ENCODE measurements at regions of chr1 and their contacts with region 1.

Region 1: DNA sequence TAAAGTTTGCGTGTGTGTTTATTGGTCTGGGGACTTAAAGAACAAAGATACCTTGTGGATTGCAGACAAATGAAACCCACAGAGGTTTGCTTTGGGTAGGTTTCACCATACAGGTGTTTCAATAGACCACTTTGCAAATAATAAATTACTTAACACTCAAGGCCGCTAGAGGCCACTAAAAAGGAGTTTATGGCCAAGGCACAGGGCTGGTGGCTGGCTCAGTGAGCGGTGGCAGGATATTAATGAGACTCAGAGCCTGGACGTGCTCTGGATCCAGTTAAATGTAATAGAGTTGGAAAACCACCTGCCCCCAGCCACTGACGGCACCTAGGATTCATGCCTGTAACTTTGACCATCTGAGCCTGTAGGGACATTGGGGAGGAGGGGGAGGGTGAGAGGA is 44.5 kb downstream of the LRRC38 start:
- DNase-seq: no peak
- H3K4me3 ChIP-seq: no peak overlapping the region
- CTCF ChIP-seq: no peak
- POLR2A ChIP-seq: no peak

Region 2: GRCh38 chr1:12220890-12221289 is 1248.5 kb before region 1 on chr1:
- intact Hi-C with region 1: loop called (anchors 5 kb)
- DNase-seq: no peak
- H3K4me3 ChIP-seq: no peak overlapping the region
- CTCF ChIP-seq: no peak
- POLR2A ChIP-seq: no peak

Region 3: DNA sequence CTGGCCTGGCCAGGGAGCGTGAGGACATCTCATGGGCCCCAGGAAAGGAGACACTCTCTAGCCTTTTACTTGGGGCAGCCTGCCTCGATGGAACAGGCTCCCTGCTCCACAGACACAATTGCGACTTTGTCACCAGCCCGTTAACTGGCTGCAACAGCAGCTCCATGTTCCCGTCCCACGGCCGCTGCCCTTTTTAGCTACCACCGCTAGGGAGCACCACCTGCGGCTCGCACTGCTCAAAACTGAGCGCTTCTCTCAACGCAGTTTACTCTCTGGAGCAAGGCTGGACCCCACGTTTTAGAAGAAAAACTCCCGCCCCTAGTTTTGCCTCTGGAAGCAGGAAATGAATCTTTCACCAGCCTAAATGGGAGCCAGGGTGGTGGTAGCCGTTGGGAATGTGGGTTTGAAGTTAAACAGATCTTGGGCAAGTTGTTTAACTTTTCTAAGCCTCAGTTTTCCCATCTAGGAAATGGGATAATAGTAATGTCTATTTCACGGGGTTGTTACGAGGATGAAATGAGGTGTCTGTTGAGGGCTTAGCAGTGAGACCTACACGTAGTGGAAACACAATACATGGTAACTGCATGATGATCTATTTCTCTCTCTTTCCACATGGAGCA is 48.0 kb after region 1 on chr1:
- intact Hi-C with region 1: no loop called
- DNase-seq: no peak
- H3K4me3 ChIP-seq: no peak overlapping the region
- CTCF ChIP-seq: no peak
- POLR2A ChIP-seq: no peak

Measured in lower leg skin (tissue), 4 donors.